Activated CD4-positive, alpha-beta memory T cell treated with anti-CD3 and anti-CD28 coated beads for 36 hours (primary cell): ENCODE measurements at regions of chr6 and their contacts with region 1.

Region 1: DNA sequence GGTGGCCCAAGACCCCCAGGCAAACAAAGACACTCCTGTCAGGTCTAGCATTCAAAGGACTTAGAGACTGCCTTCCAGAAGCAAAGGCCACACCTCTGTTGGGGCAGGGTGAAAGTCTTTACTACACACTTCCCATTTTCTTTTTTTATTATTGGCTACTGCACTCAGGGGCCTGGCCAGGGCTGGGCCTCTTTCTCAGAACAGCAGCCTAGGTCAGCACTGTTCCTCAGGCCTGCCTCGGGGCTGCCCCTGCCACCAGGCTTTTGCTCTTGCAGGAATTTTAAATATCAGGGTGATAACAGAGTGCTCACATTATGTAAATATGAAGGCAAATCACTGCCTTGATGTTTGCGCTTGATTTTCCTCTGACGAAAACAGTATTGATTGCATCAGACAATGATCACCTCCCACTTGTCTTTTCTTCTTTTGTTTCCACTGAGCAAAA is 18.5 kb downstream of the GSTA4 start:
- DNase-seq: peak; percentile 66
- H3K4me3 Mint-ChIP-seq: peak overlapping the region; percentile 10
- H3K27ac Mint-ChIP-seq: peak overlapping the region; percentile 84
- H3K4me1 Mint-ChIP-seq: peaks cover 43% of the 10 kb centered on the region
- H3K27me3 Mint-ChIP-seq: peaks cover 14% of the 10 kb centered on the region

Region 2: GRCh38 chr6:52887910-52888535 is 88.6 kb before region 1 on chr6:
- CTCF ChIA-PET with region 1: no interaction called
- POLR2A ChIA-PET with region 1: no interaction called
- intact Hi-C with region 1: loop called (anchors 1 kb)
- DNase-seq: no peak
- H3K4me3 Mint-ChIP-seq: no peak overlapping the region
- H3K27ac Mint-ChIP-seq: no peak overlapping the region
- H3K4me1 Mint-ChIP-seq: peaks cover 5% of the 10 kb centered on the region
- H3K27me3 Mint-ChIP-seq: peaks cover 5% of the 10 kb centered on the region

Region 3: DNA sequence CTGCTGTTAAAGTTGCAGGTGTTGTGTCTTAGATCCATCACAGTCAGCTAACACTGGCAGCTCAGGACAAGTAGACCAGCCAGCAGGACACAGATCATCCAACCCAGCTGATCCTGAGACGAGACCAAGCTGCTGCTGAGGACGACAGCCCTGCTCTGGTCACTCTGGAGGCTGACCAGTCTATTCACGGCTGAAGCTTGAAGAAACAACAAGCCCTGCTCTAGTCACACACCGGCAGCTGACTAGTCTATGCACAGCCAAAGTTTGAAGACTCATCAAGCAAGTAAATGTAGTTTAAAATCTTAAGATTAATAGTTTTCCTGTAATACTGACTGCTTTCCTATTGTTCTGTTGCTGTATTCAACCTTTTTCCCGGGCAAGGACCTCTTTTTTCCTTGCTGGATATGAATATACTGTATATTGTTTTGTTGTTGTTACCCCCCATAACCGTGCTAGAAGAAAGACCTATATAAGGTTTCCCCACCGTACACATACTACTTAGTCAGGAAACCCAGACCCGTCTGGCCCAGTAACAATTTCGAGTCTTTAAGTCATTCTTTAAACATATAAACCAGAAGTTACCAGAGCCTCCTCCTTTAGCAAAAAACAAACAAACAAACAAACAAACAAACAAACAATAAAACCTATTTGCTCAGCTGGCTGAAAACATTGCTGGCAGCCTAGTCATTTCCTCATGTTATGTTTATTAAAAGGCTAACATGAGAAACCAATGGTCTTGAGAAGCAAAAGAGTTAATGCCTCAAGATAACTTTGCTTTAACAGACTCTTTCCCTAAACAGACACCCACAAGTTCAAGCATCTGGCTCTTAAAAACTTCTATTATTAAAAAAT is 50.5 kb before region 1 on chr6:
- CTCF ChIA-PET with region 1: no interaction called
- POLR2A ChIA-PET with region 1: no interaction called
- intact Hi-C with region 1: no loop called
- DNase-seq: no peak
- H3K4me3 Mint-ChIP-seq: no peak overlapping the region
- H3K27ac Mint-ChIP-seq: no peak overlapping the region
- H3K4me1 Mint-ChIP-seq: no peaks in the 10 kb centered on the region
- H3K27me3 Mint-ChIP-seq: peaks cover 18% of the 10 kb centered on the region

Region 4: GRCh38 chr6:52990342-52990741 is 13.7 kb after region 1 on chr6:
- CTCF ChIA-PET with region 1: interaction called, 49 read pairs
- POLR2A ChIA-PET with region 1: interaction called, 4 read pairs
- intact Hi-C with region 1: loop called (anchors 1 kb)
- DNase-seq: peak; percentile 53
- H3K4me3 Mint-ChIP-seq: peak overlapping the region; percentile 1
- H3K27ac Mint-ChIP-seq: peak overlapping the region; percentile 87
- H3K4me1 Mint-ChIP-seq: peaks cover 60% of the 10 kb centered on the region
- H3K27me3 Mint-ChIP-seq: peaks cover 16% of the 10 kb centered on the region